WTC11 (cell line): ENCODE measurements at regions of chr5 and their contacts with region 1.

Region 1: GRCh38 chr5:119435436-119436132 is 16.7 kb upstream of the HSD17B4 start:
- DNase-seq: peak; percentile 81
- ATAC-seq: peak; percentile 96
- H3K4me3 Mint-ChIP-seq: no peak overlapping the region
- H3K27ac Mint-ChIP-seq: no peak overlapping the region
- H3K4me1 Mint-ChIP-seq: peaks cover 8% of the 10 kb centered on the region; the same call in 1 of the 2 replicates
- H3K27me3 Mint-ChIP-seq: peaks cover 12% of the 10 kb centered on the region
- CTCF ChIP-seq: peak; percentile 55

Region 2: GRCh38 chr5:118987988-118988865 is 447.4 kb before region 1 on chr5 and contains the start of gene DTWD2:
- CTCF ChIA-PET with region 1: interaction called, 11 read pairs
- POLR2A ChIA-PET with region 1: no interaction called
- DNase-seq: peak; percentile 95
- ATAC-seq: peak; percentile 99
- H3K4me3 Mint-ChIP-seq: peak within 1 kb of the TSS; percentile 67
- H3K27ac Mint-ChIP-seq: peak within 1 kb of the TSS; percentile 53
- H3K4me1 Mint-ChIP-seq: peaks cover 14% of the 10 kb centered on the region
- H3K27me3 Mint-ChIP-seq: no peaks in the 10 kb centered on the region; the same call in 1 of the 2 replicates
- CTCF ChIP-seq: peak; percentile 85
- total RNA-seq, gene DTWD2: 10.3 to 13.1 TPM (median 10.4 TPM) in 3 replicates

Region 3: DNA sequence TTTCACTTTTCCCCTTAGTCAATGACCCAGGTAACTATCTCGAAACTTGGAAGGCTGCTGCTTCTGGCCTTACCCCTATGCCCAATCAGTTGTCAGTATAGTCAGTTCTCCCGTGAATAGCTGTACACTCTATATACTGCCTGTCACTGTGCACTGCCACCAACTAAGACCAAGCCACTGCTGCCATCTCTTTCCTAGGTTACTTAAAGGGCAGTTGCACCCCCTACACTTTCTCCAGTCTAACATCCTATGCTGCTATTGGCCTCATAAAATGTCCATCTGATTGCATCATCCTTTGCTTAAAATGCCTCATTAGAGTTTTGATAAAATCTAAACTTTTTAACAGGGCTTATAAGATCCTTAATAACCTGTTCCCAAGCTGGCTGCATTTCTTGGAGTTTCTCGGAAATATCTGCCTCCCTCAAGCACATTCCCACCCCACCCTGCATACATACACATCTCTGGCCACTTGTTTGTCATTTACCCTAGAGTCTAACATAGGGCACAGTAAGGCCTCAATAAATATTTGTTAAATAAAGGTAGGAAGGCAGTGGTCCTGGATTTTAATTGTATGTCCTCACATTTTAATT is 112.5 kb before region 1 on chr5:
- CTCF ChIA-PET with region 1: no interaction called
- POLR2A ChIA-PET with region 1: no interaction called
- DNase-seq: no peak
- ATAC-seq: no peak; the same call in 1 of the 2 replicates
- H3K4me3 Mint-ChIP-seq: no peak overlapping the region
- H3K27ac Mint-ChIP-seq: no peak overlapping the region
- H3K4me1 Mint-ChIP-seq: peaks cover 70% of the 10 kb centered on the region
- H3K27me3 Mint-ChIP-seq: no peaks in the 10 kb centered on the region
- CTCF ChIP-seq: no peak

Region 4: GRCh38 chr5:119452373-119453039 is 16.9 kb after region 1 on chr5 and contains the start of gene HSD17B4:
- CTCF ChIA-PET with region 1: interaction called, 11 read pairs
- POLR2A ChIA-PET with region 1: no interaction called
- DNase-seq: peak; percentile 93
- ATAC-seq: peak; percentile 91
- H3K4me3 Mint-ChIP-seq: peak within 1 kb of the TSS; percentile 88
- H3K27ac Mint-ChIP-seq: peak within 1 kb of the TSS; percentile 83
- H3K4me1 Mint-ChIP-seq: peaks cover 48% of the 10 kb centered on the region
- H3K27me3 Mint-ChIP-seq: no peaks in the 10 kb centered on the region; the same call in 1 of the 2 replicates
- CTCF ChIP-seq: no peak
- total RNA-seq, gene HSD17B4: 362 to 409 TPM (median 407 TPM) in 3 replicates